ENCODE measurements at regions of chr12 and their contacts with region 1.

Region 1: DNA sequence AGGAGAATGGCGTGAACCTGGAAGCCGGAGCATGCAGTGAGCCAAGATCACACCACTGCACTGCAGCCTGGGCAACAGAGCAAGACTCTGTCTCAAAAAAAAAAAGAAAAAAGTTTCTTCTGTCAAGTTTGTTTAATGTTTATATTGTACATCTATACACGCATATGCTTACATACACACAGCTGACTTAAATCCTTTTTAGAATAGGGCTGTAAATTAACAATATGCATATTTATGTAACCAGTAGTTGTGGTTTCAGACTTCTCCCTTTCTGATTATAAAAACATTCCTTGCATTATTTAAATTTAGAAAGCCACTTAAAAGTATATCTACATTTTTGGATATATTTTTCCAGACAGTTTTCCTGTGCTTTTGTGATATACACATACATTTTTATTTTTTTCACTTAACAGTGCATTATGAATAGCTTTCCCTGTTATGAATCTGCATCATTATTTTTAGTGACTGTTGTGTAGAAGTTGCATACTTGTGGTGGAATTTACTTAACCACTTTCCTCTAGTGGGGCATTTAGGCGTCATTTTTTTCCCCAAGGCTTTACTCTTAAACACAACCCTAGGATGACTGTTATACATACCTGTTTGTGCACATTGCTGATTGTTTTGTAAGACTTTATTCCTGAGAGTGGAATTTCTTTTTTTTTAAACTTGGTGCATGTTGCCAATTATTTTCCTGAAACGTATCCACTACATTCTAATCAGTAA is 29.4 kb downstream of the POLR3B start:
- DNase-seq: no peak
- ATAC-seq: no peak
- H3K4me3 ChIP-seq: no peak overlapping the region
- H3K27ac ChIP-seq: no peak overlapping the region
- H3K4me1 ChIP-seq: no peaks in the 10 kb centered on the region
- H3K27me3 ChIP-seq: no peaks in the 10 kb centered on the region
- CTCF ChIP-seq: no peak

Region 2: GRCh38 chr12:106855221-106855758 is 468.3 kb after region 1 on chr12:
- intact Hi-C with region 1: loop called in 1 of 10 experiments (anchors 10 kb)
- DNase-seq: no peak
- ATAC-seq: peak in 1 of 8 donors; percentile 9
- H3K4me3 ChIP-seq: no peak overlapping the region
- H3K27ac ChIP-seq: no peak overlapping the region
- H3K4me1 ChIP-seq: peaks cover 0 to 13% (median 0%) of the 10 kb centered on the region in 9 donors
- H3K27me3 ChIP-seq: no peaks in the 10 kb centered on the region
- CTCF ChIP-seq: no peak

Region 3: DNA sequence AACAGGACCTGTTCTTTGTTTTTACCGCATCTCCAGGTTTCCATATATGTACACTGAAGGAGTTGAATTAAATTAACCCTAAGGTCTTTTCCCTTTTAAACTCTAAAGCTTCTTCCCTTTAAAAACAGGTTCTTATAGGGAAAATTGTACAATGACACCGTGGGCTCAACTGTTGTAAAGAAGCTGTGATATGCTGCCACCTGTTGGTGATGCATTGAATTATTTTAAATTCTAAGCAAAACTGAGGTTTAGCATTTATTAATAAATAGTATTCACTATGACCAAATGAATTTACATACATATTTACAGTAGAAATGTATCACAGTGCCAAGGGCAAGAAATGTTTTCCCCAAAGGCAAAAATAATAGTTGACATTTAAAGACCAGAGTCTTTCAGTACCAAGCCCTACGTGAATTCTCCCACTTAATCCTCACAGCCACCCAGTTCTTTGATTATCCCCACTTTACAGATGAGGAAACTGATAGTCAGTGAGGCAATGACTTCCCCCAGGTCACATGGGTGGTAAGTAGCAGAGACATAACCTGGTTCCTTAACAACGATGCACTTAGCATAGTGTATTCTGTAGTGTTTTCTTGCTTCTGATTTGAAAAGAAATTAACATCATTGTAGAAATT is 533.1 kb after region 1 on chr12:
- intact Hi-C with region 1: loop called (anchors 1 to 10 kb)
- DNase-seq: peak in 1 of 2 donors; percentile 14
- ATAC-seq: peak in 2 of 8 donors; percentile 27 to 55
- H3K4me3 ChIP-seq: no peak overlapping the region
- H3K27ac ChIP-seq: no peak overlapping the region
- H3K4me1 ChIP-seq: peaks cover 0 to 5% (median 0%) of the 10 kb centered on the region in 9 donors
- H3K27me3 ChIP-seq: peaks cover 0 to 94% (median 0%) of the 10 kb centered on the region in 7 donors
- CTCF ChIP-seq: peak; percentile 61 to 93 (median 84)

Region 4: GRCh38 chr12:107101651-107102050 is 714.7 kb after region 1 on chr12:
- intact Hi-C with region 1: loop called in 7 of 10 experiments (anchors 5 to 10 kb)
- DNase-seq: no peak
- ATAC-seq: no peak
- H3K4me3 ChIP-seq: no peak overlapping the region
- H3K27ac ChIP-seq: no peak overlapping the region
- H3K4me1 ChIP-seq: no peaks in the 10 kb centered on the region
- H3K27me3 ChIP-seq: no peaks in the 10 kb centered on the region
- CTCF ChIP-seq: no peak

Region 5: DNA sequence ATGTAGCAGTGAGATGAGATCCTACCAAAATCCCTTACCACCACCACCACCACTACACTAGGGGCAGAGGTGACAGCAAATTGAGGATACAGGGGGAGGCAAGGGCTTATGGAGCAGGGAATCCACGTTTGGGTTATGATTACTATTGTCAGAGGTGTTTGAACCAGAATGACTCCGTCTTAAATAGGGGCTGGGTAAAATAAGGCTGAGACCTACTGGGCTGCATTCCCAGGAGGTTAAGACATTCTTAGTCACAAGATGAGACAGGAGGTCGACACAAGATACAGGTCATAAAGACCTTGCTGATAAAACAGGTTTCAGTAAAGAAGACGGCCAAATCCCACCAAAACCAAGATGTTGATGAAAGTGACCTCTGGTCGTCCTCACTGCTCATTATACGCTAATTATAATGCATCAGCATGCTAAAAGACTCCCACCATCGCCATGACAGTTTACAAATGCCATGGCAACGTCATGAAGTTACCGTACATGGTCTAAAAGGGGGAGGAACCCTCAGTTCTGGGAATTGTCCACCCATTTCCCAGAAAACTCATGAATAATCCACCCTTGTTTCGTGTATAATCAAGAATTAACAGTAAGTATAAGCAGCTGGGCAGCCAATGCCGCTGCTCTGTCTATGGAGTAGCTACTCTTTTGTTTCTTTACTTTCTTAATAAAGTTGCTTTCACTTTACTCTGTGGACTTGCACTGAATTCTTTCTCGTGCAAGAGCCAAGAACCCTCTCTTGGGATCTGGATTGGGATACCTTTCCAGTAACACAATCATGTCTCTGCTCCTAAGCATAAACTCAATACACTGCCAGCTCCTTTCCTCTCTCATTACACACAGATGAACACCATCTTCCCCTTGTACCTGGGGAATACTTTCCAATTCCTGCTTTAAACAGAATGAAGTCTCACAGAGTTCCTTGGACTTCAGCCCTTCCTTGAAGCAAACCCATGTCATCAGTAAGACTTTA is 723.1 kb after region 1 on chr12:
- intact Hi-C with region 1: loop called in 6 of 10 experiments (anchors 5 to 10 kb)
- DNase-seq: no peak
- ATAC-seq: peak in 5 of 8 donors; percentile 14 to 49 (median 37)
- H3K4me3 ChIP-seq: peak overlapping the region in 3 of 10 donors; percentile 3 to 20 (median 15)
- H3K27ac ChIP-seq: peak overlapping the region in 1 of 10 donors; percentile 51
- H3K4me1 ChIP-seq: peaks cover 0 to 10% (median 0%) of the 10 kb centered on the region in 9 donors
- H3K27me3 ChIP-seq: peaks cover 0 to 8% (median 0%) of the 10 kb centered on the region in 7 donors
- CTCF ChIP-seq: no peak

Measured in heart right ventricle (tissue), 16 donors.